IMR-90 (cell line): ENCODE measurements at regions of chr7 and their contacts with region 1.

Region 1: GRCh38 chr7:44797329-44798251 is 1.1 kb downstream of the PPIA start:
- DNase-seq: peak; percentile 84
- ATAC-seq: peak; percentile 61
- H3K4me3 ChIP-seq: peak overlapping the region; percentile 91
- H3K27ac ChIP-seq: peak overlapping the region; percentile 97
- H3K4me1 ChIP-seq: peaks cover 2% of the 10 kb centered on the region; the same call in 1 of the 2 replicates
- H3K27me3 ChIP-seq: no peaks in the 10 kb centered on the region
- CTCF ChIP-seq: peak; percentile 42
- POLR2A ChIP-seq: peak; percentile 77
- RAD21 ChIP-seq: peak; percentile 38

Region 2: GRCh38 chr7:44587843-44588711 is 209.5 kb before region 1 on chr7:
- CTCF ChIA-PET with region 1: interaction called, 5 read pairs
- POLR2A ChIA-PET with region 1: no interaction called
- dilution Hi-C with region 1: no loop called
- in situ Hi-C with region 1: no loop called
- intact Hi-C with region 1: loop called (anchors 1 kb)
- DNase-seq: peak; percentile 66
- ATAC-seq: peak; percentile 92
- H3K4me3 ChIP-seq: no peak overlapping the region
- H3K27ac ChIP-seq: no peak overlapping the region
- H3K4me1 ChIP-seq: peaks cover 2% of the 10 kb centered on the region; the same call in 1 of the 2 replicates
- H3K27me3 ChIP-seq: no peaks in the 10 kb centered on the region
- CTCF ChIP-seq: peak; percentile 84
- POLR2A ChIP-seq: no peak
- RAD21 ChIP-seq: peak; percentile 91

Region 3: GRCh38 chr7:44606450-44607254 is 190.9 kb before region 1 on chr7 and contains the start of gene OGDH:
- CTCF ChIA-PET with region 1: no interaction called
- POLR2A ChIA-PET with region 1: no interaction called
- dilution Hi-C with region 1: no loop called
- in situ Hi-C with region 1: no loop called
- intact Hi-C with region 1: loop called (anchors 2 kb)
- DNase-seq: peak; percentile 99
- ATAC-seq: peak; percentile 99
- H3K4me3 ChIP-seq: peak within 1 kb of the TSS; percentile 85
- H3K27ac ChIP-seq: peak within 1 kb of the TSS; percentile 85
- H3K4me1 ChIP-seq: no peaks in the 10 kb centered on the region
- H3K27me3 ChIP-seq: no peaks in the 10 kb centered on the region
- CTCF ChIP-seq: no peak
- POLR2A ChIP-seq: peak; percentile 91
- RAD21 ChIP-seq: no peak
- total RNA-seq, gene OGDH: 52.8 and 56.5 TPM in 2 replicates

Region 4: DNA sequence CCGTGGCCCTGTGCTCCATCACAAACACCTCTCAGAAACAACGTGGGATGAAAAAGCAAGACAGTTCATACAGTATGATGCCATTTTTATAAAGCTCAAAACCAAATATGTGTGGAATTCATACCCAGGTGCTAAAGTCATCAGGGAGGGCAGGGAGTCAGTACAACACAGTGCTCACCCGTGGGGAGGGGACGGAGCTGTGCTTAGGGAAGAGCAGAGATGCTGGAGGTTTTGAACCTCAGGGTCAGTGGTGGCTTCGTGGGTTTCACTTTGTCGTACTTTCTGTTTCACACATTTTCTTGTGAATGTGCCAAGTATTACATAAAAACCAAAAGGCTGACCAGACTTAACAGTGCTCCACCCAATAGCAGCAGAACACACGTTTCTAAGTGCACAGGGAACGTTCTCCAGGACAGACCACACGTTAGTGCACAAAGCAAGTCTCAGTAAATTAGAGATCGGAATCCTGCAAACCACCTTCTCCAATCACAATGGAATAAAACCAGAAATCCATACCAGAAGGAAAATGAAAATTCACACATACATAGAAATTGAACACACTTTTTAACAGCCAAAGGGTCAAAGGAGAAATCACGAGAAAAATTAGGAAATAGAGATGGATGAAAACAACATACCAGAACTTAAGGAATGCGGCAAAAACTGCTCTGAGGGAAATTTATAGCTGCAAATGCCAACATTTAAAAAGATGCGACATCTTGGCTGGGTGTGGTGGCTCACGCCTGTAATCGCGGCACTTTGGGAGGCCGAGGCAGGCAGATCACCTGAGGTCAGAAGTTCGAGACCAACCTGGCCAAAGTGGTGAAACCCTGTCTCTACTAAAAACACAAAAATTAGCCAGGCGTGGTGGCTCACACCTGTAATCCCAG is 27.6 kb before region 1 on chr7:
- CTCF ChIA-PET with region 1: no interaction called
- POLR2A ChIA-PET with region 1: no interaction called
- dilution Hi-C with region 1: no loop called
- in situ Hi-C with region 1: no loop called
- intact Hi-C with region 1: loop called (anchors 2 kb)
- DNase-seq: peak; percentile 47
- ATAC-seq: peak; percentile 46
- H3K4me3 ChIP-seq: no peak overlapping the region; the same call in 1 of the 2 replicates
- H3K27ac ChIP-seq: peak overlapping the region; percentile 14; the same call in 1 of the 2 replicates
- H3K4me1 ChIP-seq: peaks cover 33% of the 10 kb centered on the region
- H3K27me3 ChIP-seq: no peaks in the 10 kb centered on the region
- CTCF ChIP-seq: no peak
- POLR2A ChIP-seq: no peak
- RAD21 ChIP-seq: no peak

Region 5: DNA sequence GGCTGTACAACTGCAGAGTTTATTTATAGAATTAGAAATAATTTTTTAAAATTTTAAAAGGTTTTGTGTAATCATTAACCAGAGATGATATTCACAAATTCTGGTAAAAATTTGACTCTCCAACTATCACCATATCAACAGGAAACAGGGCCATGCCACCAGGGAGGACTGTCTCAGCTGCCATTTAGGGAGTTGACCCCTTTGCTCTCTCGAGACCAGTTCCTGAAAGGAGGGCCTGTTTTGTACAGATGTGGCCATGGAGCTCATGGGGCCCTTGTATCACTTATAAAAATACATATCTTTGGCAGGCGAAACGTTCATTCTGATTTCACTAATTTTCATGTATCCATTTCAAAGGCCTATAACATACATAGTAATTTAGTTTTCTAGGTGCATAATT is 30.0 kb after region 1 on chr7:
- CTCF ChIA-PET with region 1: no interaction called
- POLR2A ChIA-PET with region 1: no interaction called
- dilution Hi-C with region 1: no loop called
- in situ Hi-C with region 1: no loop called
- intact Hi-C with region 1: no loop called
- DNase-seq: no peak
- ATAC-seq: no peak
- H3K4me3 ChIP-seq: no peak overlapping the region
- H3K27ac ChIP-seq: no peak overlapping the region
- H3K4me1 ChIP-seq: no peaks in the 10 kb centered on the region
- H3K27me3 ChIP-seq: no peaks in the 10 kb centered on the region
- CTCF ChIP-seq: no peak
- POLR2A ChIP-seq: no peak
- RAD21 ChIP-seq: no peak

Region 6: DNA sequence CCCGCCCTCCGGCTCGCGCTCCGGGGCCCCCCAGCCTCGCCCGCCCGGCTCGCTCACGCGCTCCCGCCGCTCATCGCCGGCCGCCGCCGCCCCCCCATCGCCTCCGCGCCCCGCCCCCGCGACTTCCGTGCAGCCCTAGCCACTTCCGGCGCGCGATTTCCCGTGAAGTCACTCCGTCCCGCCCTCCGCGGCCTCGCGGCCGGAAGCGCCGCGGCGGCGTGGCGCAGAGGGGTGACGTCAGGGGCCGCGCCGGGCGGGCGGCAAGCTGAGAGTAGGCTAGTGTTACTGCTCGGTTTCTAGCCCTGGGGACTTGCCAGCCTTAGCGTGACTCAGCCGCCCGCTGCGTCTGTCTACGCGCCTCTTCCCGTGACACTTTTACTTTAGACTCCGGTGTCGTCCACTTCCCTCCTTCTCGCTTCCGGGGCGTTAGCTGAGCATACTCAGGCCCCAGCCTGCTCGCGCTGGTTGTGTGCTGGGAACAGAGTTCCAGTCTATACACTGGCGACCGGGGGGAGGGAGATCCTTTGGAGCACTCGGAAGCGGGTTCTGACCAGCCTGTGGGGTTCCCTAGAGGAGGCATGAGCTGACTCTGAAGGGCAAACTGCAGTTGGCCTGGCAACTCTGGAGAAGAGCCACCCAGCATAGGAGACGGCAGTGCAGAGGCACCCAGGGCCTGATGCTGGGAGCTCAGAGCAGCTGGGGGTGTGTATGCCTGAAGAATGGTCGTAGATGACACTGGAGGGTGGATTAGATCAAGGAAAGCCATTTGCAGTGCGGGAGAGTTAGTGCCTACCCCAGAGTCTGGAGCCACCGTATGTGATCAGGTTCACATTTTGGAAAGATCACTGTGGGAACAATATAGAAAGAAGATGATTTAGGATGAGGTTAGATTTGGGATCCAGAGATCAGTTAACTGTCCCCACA is 88.1 kb after region 1 on chr7 and contains the start of gene PURB:
- CTCF ChIA-PET with region 1: no interaction called
- POLR2A ChIA-PET with region 1: no interaction called
- dilution Hi-C with region 1: no loop called
- in situ Hi-C with region 1: no loop called
- intact Hi-C with region 1: loop called (anchors 1 kb)
- DNase-seq: peak; percentile 98
- ATAC-seq: peak; percentile 85
- H3K4me3 ChIP-seq: peak within 1 kb of the TSS; percentile 94
- H3K27ac ChIP-seq: peak within 1 kb of the TSS; percentile 91
- H3K4me1 ChIP-seq: peaks cover 7% of the 10 kb centered on the region; the same call in 1 of the 2 replicates
- H3K27me3 ChIP-seq: no peaks in the 10 kb centered on the region
- CTCF ChIP-seq: no peak
- POLR2A ChIP-seq: peak; percentile 90
- RAD21 ChIP-seq: no peak
- total RNA-seq, gene PURB: 8.8 and 15.3 TPM in 2 replicates

Region 7: DNA sequence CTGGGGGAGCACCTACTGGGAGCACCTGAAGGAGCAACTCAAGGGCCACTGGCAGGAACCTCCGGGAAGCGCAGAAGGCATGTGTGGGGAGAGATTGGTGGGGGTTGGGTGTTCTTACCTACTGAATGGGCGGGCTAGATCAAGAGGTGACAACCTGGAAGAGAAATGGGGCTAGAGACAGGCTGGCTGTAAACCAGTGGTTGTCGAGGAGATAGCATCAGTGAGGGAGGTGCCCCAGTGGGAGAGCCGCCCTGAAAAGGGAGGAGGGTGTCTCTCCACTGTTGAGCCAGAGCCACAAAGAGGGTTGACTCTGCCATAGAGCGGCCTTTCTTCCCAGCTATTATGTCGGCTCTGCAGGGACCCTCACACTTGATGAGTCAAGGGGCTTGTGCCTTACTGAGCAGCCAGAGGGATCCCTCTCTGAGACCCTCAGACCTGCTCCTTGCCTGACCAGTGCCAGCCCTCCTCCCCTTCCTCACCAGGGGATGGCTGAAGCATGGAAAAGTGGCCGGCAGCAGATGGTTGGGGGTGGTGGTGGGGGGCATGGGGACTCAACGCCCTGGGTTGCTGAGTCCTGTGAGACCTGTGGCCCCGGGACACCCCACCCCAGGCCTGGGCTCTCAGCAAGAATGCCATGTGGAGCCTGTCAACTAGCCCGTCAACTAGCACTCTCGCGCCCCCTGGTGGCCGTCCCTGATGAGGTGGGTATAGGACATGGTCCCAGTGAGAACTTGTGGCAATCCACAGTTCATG is 124.2 kb after region 1 on chr7:
- CTCF ChIA-PET with region 1: no interaction called
- POLR2A ChIA-PET with region 1: interaction called, 3 read pairs
- dilution Hi-C with region 1: no loop called
- in situ Hi-C with region 1: no loop called
- intact Hi-C with region 1: loop called (anchors 5 kb)
- DNase-seq: peak; percentile 57
- ATAC-seq: peak; percentile 98
- H3K4me3 ChIP-seq: no peak overlapping the region
- H3K27ac ChIP-seq: no peak overlapping the region
- H3K4me1 ChIP-seq: no peaks in the 10 kb centered on the region
- H3K27me3 ChIP-seq: peaks cover under 1% of the 10 kb centered on the region
- CTCF ChIP-seq: peak; percentile 84
- POLR2A ChIP-seq: 0 out of 2 replicates have a peak, but pooled peaks have one; percentile 31
- RAD21 ChIP-seq: peak; percentile 90